K562 (cell line): ENCODE measurements at regions of chr20 and their contacts with region 1.

Region 1: DNA sequence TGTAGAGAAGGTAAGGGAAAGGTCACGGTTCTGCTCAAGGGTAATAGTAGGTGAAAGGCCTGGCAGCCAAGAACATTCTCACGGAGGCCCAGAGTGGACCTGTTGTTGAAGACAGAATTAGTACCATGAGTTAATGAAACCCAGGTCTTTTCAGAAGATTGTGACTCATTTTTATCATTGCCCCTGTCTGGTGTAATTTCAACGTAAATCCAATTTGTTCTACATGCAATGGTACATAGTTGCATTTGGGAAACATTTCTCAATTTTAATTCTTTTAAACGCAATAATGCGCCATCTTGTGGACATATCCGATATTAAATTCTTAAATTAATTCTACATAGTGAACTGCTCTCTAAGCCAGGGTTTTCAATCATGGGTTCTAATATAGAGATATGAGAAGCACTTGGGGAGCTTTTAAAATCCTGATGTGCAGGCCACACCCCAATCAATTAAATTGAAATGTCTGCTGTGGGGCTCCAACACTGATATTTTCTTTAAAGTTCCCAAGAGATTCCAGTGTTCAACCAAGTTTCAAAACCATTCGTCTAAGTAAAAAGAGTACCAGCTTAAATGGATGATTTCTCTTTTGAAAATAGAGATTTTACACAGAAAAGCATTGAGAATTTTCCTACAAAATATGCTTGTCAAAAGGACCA is 257.4 kb downstream of the PLCB1 start:
- DNase-seq: peak; percentile 2 to 27 (median 4)
- ATAC-seq: no peak
- H3K4me3 ChIP-seq: no peak overlapping the region
- H3K27ac ChIP-seq: no peak overlapping the region
- H3K4me1 ChIP-seq: no peaks in the 10 kb centered on the region
- H3K27me3 ChIP-seq: no peaks in the 10 kb centered on the region
- CTCF ChIP-seq: peak in 2 of 3 experiments; percentile 24 to 38; a peak in 2 of 6 replicates
- EP300 ChIP-seq: no peak
- POLR2A ChIP-seq: no peak
- RAD21 ChIP-seq: peak; percentile 16 to 40; a peak in 3 of 4 replicates

Region 2: DNA sequence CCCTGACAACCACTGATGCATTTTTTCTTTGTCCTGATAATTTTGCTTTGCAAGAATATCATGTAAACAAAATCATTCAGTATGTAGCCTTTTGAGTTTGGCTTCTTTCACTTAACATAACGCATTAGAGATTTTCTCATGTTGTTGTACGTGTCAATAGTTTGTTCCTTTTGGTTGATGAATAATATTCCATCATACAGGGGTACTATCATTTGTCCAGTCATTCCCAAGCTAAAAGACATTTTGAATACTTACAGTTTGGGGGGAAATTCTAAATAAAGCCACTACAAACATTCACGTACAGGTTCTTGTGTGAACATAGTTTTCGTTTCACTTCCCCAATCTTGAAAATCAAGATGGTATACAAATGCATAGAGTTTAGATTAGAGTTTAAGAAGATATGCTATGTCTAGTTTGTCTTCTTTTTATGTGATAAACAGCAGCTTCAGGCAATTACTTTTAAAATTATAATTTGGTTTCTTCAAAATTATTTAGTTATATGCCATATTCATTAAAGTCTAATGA is 454.4 kb before region 1 on chr20:
- CTCF ChIA-PET with region 1: no interaction called
- POLR2A ChIA-PET with region 1: no interaction called
- in situ Hi-C with region 1: no loop called
- intact Hi-C with region 1: loop called (anchors 5 kb)
- DNase-seq: no peak
- ATAC-seq: no peak
- H3K4me3 ChIP-seq: no peak overlapping the region
- H3K27ac ChIP-seq: no peak overlapping the region
- H3K4me1 ChIP-seq: no peaks in the 10 kb centered on the region
- H3K27me3 ChIP-seq: no peaks in the 10 kb centered on the region
- CTCF ChIP-seq: no peak
- EP300 ChIP-seq: no peak
- POLR2A ChIP-seq: no peak
- RAD21 ChIP-seq: no peak

Region 3: GRCh38 chr20:8043687-8044282 is 345.7 kb before region 1 on chr20:
- CTCF ChIA-PET with region 1: interaction called, 4 read pairs
- POLR2A ChIA-PET with region 1: no interaction called
- in situ Hi-C with region 1: loop called (anchors 25 kb)
- intact Hi-C with region 1: loop called (anchors 5 kb)
- DNase-seq: peak; percentile 27 to 45 (median 40)
- ATAC-seq: peak; percentile 78
- H3K4me3 ChIP-seq: no peak overlapping the region
- H3K27ac ChIP-seq: no peak overlapping the region
- H3K4me1 ChIP-seq: no peaks in the 10 kb centered on the region
- H3K27me3 ChIP-seq: no peaks in the 10 kb centered on the region
- CTCF ChIP-seq: peak; percentile 16 to 59 (median 28); a peak in 3 of 6 replicates
- EP300 ChIP-seq: no peak
- POLR2A ChIP-seq: no peak
- RAD21 ChIP-seq: peak; percentile 52 to 65

Region 4: DNA sequence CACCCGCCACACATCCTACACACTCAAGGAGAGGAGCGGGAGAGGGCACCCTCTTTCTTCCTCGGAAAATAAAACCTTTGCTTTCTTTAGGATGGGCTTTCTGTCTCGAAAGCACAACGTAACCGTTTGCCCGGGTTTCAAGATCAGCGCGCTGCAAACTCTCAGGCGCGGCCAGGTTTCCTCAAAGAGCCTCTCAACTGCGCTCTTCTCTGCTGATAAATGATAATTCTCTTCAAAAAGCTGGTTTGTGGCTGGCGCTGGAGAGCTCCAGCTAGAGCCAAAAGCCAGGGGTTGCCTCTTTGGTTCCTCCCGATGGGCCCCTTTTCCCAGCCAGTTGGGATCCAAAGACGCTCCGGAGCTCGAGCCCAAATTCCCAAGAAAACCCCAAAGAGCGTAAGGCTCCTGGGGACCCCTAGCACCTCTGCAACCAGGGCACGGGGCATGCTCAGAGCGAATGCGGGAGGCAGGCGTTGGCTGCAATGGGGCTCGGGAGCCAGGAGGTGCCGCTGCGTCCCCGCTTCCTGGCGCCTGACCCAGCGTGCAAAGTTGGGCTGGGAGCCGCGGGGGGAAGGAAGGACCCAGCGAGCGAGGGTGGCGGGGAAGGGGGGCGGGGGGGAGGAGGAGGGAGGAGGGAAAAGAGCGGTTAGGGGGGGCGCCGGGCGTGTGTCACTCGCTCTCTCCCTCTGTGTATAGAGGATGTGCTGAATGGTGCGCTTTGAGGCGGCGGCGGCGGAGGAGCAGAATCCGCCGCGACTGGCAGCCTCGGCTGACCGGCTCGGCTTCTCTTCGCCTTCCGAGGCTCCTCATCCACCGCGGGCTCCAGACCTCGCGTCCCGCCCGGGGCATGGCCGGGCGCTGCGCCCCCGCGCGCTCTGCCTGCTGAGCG is 257.7 kb before region 1 on chr20 and contains the start of gene PLCB1:
- CTCF ChIA-PET with region 1: interaction called, 3 read pairs
- POLR2A ChIA-PET with region 1: no interaction called
- in situ Hi-C with region 1: no loop called
- intact Hi-C with region 1: loop called (anchors 10 kb)
- DNase-seq: peak; percentile 16 to 26 (median 18)
- ATAC-seq: peak; percentile 90
- H3K4me3 ChIP-seq: no peak within 1 kb of the TSS
- H3K27ac ChIP-seq: no peak within 1 kb of the TSS
- H3K4me1 ChIP-seq: 0 out of 5 replicates have a peak, but pooled peaks cover 0 to 4% of the 10 kb centered on the region in 2 experiments
- H3K27me3 ChIP-seq: no peaks in the 10 kb centered on the region
- CTCF ChIP-seq: peak; percentile 22 to 43 (median 40); a peak in 4 of 6 replicates
- EP300 ChIP-seq: no peak
- POLR2A ChIP-seq: no peak
- RAD21 ChIP-seq: peak; percentile 45 to 49
- polyA plus RNA-seq, gene PLCB1: 0.34 to 0.74 TPM

Region 5: GRCh38 chr20:8578191-8578865 is 188.8 kb after region 1 on chr20:
- CTCF ChIA-PET with region 1: no interaction called
- POLR2A ChIA-PET with region 1: no interaction called
- in situ Hi-C with region 1: no loop called
- intact Hi-C with region 1: no loop called
- DNase-seq: no peak
- ATAC-seq: no peak
- H3K4me3 ChIP-seq: no peak overlapping the region
- H3K27ac ChIP-seq: no peak overlapping the region
- H3K4me1 ChIP-seq: no peaks in the 10 kb centered on the region
- H3K27me3 ChIP-seq: no peaks in the 10 kb centered on the region
- CTCF ChIP-seq: no peak
- EP300 ChIP-seq: no peak
- POLR2A ChIP-seq: no peak
- RAD21 ChIP-seq: no peak